CD4-positive, alpha-beta memory T cell (primary cell): ENCODE measurements at regions of chr6 and their contacts with region 1.

Region 1: GRCh38 chr6:2988426-2989331 is 11.0 kb upstream of the NQO2 start:
- DNase-seq: peak; percentile 76 to 78 (median 77)
- H3K4me3 ChIP-seq: peak overlapping the region; percentile 52 to 66
- H3K4me3 Mint-ChIP-seq: peak overlapping the region; percentile 92 to 98 (median 98)
- H3K27ac ChIP-seq: peak overlapping the region; percentile 92
- H3K27ac Mint-ChIP-seq: peak overlapping the region; percentile 99 to 100 (median 100)
- H3K4me1 ChIP-seq: peaks cover 26% of the 10 kb centered on the region
- H3K4me1 Mint-ChIP-seq: peaks cover 19 to 37% (median 27%) of the 10 kb centered on the region in 4 donors
- H3K27me3 ChIP-seq: no peaks in the 10 kb centered on the region
- H3K27me3 Mint-ChIP-seq: no peaks in the 10 kb centered on the region

Region 2: GRCh38 chr6:2848851-2849250 is 139.8 kb before region 1 on chr6:
- CTCF ChIA-PET with region 1: interaction called, 59 read pairs
- POLR2A ChIA-PET with region 1: interaction called, 43 read pairs
- intact Hi-C with region 1: loop called (anchors 1 kb)
- DNase-seq: peak; percentile 61 to 89 (median 72)
- H3K4me3 ChIP-seq: peak overlapping the region in 1 of 2 donors; percentile 29
- H3K4me3 Mint-ChIP-seq: peak overlapping the region in 6 of 8 donors; percentile 40 to 80 (median 67)
- H3K27ac ChIP-seq: peak overlapping the region; percentile 5
- H3K27ac Mint-ChIP-seq: peak overlapping the region; percentile 66 to 96 (median 90)
- H3K4me1 ChIP-seq: peaks cover 43% of the 10 kb centered on the region
- H3K4me1 Mint-ChIP-seq: peaks cover 23 to 55% (median 42%) of the 10 kb centered on the region in 4 donors
- H3K27me3 ChIP-seq: no peaks in the 10 kb centered on the region
- H3K27me3 Mint-ChIP-seq: no peaks in the 10 kb centered on the region

Region 3: DNA sequence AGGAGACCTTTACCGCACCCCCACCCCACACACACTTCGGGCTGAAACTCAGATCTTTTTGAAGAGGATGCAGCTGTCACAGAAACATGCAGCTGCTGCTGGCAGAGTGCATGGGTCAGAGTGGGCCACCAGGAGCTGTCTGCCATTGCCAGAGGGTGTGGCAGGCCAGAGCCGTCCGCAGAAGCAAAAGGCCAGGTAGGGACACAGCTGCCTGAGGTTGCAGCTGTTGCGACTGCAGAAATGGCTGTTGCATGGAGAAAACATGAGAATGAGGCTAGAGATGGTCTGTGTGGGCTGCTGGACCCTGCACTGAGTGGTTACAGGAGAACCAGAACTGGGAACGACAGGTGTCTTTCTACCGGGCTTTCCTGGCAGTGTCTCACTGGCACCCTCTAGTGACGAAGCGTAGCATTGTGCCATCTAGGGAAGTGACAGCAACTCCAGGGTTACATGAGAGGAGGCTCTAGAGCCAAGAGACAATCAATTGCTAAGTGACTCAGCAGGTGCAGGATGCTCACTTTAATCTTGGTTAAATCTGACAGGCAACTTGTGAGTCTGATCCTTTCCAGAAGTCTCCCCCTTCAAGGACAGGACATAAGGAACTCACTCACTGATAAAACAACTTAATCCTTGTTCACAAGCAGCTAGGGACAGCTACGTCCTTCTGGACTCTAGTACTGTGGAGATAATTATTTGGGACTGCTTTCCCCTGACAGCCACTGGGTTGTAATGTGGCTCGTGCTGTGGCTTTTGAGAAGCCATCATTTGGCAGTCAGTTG is 56.5 kb before region 1 on chr6:
- CTCF ChIA-PET with region 1: interaction called, 108 read pairs
- POLR2A ChIA-PET with region 1: interaction called, 248 read pairs
- intact Hi-C with region 1: loop called (anchors 1 kb)
- DNase-seq: peak; percentile 79 to 87 (median 81)
- H3K4me3 ChIP-seq: no peak overlapping the region
- H3K4me3 Mint-ChIP-seq: peak overlapping the region in 3 of 8 donors; percentile 33 to 53 (median 41)
- H3K27ac ChIP-seq: no peak overlapping the region
- H3K27ac Mint-ChIP-seq: peak overlapping the region in 4 of 7 donors; percentile 4 to 60 (median 41)
- H3K4me1 ChIP-seq: peaks cover 21% of the 10 kb centered on the region
- H3K4me1 Mint-ChIP-seq: peaks cover 18 to 23% (median 22%) of the 10 kb centered on the region in 4 donors
- H3K27me3 ChIP-seq: no peaks in the 10 kb centered on the region
- H3K27me3 Mint-ChIP-seq: no peaks in the 10 kb centered on the region

Region 4: DNA sequence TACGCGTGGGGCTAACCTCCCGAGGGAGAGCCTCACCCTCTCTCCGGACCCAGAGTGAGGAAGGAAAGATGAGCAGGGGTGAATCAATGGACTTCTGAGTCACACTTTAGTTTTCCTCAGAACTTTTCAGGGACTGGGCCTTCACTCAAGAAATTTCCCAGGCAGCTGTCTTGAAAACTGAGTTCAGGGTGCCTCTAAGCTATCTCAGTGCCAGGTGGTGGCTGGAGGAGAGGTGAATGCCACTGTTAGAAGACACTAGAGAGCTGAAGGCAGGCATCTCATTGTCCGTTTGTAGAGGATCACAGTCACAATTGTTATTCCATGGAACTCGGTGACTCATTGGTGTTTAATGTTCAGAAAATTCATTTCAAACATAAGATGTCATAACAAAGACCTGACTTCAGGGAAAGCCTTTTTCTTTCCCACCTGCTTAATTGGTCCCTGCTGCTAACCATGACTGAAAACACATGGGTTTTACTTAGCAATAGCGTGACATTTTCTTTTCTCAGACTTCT is 12.1 kb before region 1 on chr6:
- CTCF ChIA-PET with region 1: interaction called, 4 read pairs
- POLR2A ChIA-PET with region 1: interaction called, 27 read pairs
- intact Hi-C with region 1: loop called (anchors 1 kb)
- DNase-seq: no peak
- H3K4me3 ChIP-seq: no peak overlapping the region
- H3K4me3 Mint-ChIP-seq: no peak overlapping the region
- H3K27ac ChIP-seq: no peak overlapping the region
- H3K27ac Mint-ChIP-seq: peak overlapping the region in 1 of 7 donors; percentile 79
- H3K4me1 ChIP-seq: no peaks in the 10 kb centered on the region
- H3K4me1 Mint-ChIP-seq: peaks cover 11 to 16% (median 11%) of the 10 kb centered on the region in 4 donors
- H3K27me3 ChIP-seq: no peaks in the 10 kb centered on the region
- H3K27me3 Mint-ChIP-seq: peaks cover 9% of the 10 kb centered on the region in 2 donors

Region 5: GRCh38 chr6:3032986-3033385 is 44.3 kb after region 1 on chr6:
- CTCF ChIA-PET with region 1: no interaction called
- POLR2A ChIA-PET with region 1: no interaction called
- intact Hi-C with region 1: no loop called
- DNase-seq: no peak
- H3K4me3 ChIP-seq: no peak overlapping the region
- H3K4me3 Mint-ChIP-seq: no peak overlapping the region
- H3K27ac ChIP-seq: no peak overlapping the region
- H3K27ac Mint-ChIP-seq: no peak overlapping the region
- H3K4me1 ChIP-seq: peaks cover 7% of the 10 kb centered on the region
- H3K4me1 Mint-ChIP-seq: peaks cover 0 to 7% (median 2%) of the 10 kb centered on the region in 4 donors
- H3K27me3 ChIP-seq: no peaks in the 10 kb centered on the region
- H3K27me3 Mint-ChIP-seq: peaks cover 0 to 2% of the 10 kb centered on the region in 2 donors

Region 6: DNA sequence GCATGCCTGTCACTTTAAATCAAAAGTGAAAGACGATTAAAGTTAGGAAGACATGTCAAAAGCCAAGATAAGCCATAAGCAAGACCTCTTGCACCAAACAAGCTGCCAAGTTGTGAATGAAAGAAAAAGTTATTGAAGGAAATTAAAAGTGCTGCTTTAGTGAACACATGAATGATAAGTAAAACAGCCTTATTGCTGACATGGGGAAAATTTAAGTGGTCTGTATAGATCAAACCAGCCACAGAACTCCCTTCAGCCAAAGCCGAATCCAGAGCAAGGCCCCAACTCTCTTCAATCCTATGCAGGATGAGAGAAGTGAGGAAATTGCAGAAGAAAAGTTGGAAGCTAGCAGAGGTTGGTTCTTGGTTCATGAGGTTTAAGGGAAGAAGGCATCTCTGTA is 70.3 kb after region 1 on chr6:
- CTCF ChIA-PET with region 1: interaction called, 13 read pairs
- POLR2A ChIA-PET with region 1: interaction called, 48 read pairs
- intact Hi-C with region 1: no loop called
- DNase-seq: no peak
- H3K4me3 ChIP-seq: no peak overlapping the region
- H3K4me3 Mint-ChIP-seq: peak overlapping the region in 4 of 8 donors; percentile 24 to 43 (median 41)
- H3K27ac ChIP-seq: no peak overlapping the region
- H3K27ac Mint-ChIP-seq: peak overlapping the region in 3 of 7 donors; percentile 50 to 66 (median 55)
- H3K4me1 ChIP-seq: peaks cover 14% of the 10 kb centered on the region
- H3K4me1 Mint-ChIP-seq: peaks cover 8 to 32% (median 22%) of the 10 kb centered on the region in 4 donors
- H3K27me3 ChIP-seq: no peaks in the 10 kb centered on the region
- H3K27me3 Mint-ChIP-seq: no peaks in the 10 kb centered on the region

Region 7: DNA sequence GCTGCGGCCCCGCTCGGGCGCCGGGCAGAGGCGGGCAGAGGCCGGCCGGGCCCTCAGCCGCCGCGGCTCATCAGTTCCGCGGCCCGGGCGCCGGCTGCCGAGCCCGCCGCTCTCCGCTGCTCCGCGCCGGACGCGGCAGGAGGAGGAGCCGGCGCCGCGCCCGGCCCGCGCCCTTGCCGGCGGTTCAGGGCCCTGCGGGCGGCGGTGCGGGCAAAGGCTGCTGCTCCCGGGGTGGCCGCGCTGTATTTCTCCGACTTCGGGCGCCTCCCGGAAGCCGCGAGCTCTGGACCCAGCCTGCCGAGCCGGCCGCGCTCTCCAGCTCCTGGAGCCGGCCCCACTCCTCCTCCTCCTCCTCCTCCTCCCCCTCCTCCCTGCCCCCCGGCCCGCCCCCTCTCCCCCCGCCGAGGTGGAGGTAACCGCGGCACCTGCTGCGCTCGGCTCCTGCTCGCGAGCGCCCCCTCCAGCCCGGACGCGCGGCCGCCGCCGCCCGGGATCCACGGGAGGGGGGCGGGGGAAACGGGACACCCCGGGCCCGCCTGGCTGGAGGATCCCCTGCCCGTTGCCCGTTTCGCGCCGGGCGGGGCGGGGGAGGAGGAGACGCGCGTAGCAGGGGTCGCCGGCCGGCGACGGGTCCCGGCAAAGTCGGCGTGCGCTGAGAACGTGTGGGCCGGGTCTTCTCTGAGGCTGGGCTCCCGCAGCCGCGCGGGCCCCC is 468.2 kb after region 1 on chr6 and contains the start of gene SLC22A23:
- CTCF ChIA-PET with region 1: no interaction called
- POLR2A ChIA-PET with region 1: no interaction called
- intact Hi-C with region 1: loop called (anchors 10 kb)
- DNase-seq: peak; percentile 74 to 79 (median 76)
- H3K4me3 ChIP-seq: peak within 1 kb of the TSS; percentile 55 to 63
- H3K4me3 Mint-ChIP-seq: peak within 1 kb of the TSS; percentile 81 to 92 (median 88)
- H3K27ac ChIP-seq: peak within 1 kb of the TSS; percentile 37
- H3K27ac Mint-ChIP-seq: peak within 1 kb of the TSS; percentile 62 to 89 (median 80)
- H3K4me1 ChIP-seq: peaks cover 35% of the 10 kb centered on the region
- H3K4me1 Mint-ChIP-seq: peaks cover 6 to 14% (median 9%) of the 10 kb centered on the region in 4 donors
- H3K27me3 ChIP-seq: peaks cover 6% of the 10 kb centered on the region
- H3K27me3 Mint-ChIP-seq: peaks cover 3 to 9% of the 10 kb centered on the region in 2 donors
- total RNA-seq, gene SLC22A23: 7.9 to 12.5 TPM